ENCODE measurements at regions of chr1 and their contacts with region 1.

Region 1: GRCh38 chr1:13662493-13662892 is 37.5 kb upstream of the PRDM2 start:
- DNase-seq: peak; percentile 67
- H3K4me3 ChIP-seq: no peak overlapping the region
- H3K27ac ChIP-seq: peak overlapping the region in 3 of 4 donors; percentile 12 to 69 (median 34)
- H3K4me1 ChIP-seq: peaks cover 0 to 15% (median 4%) of the 10 kb centered on the region in 4 donors
- H3K27me3 ChIP-seq: no peaks in the 10 kb centered on the region
- CTCF ChIP-seq: no peak
- EP300 ChIP-seq: peak in 1 of 4 donors; percentile 32
- POLR2A ChIP-seq: no peak

Region 2: DNA sequence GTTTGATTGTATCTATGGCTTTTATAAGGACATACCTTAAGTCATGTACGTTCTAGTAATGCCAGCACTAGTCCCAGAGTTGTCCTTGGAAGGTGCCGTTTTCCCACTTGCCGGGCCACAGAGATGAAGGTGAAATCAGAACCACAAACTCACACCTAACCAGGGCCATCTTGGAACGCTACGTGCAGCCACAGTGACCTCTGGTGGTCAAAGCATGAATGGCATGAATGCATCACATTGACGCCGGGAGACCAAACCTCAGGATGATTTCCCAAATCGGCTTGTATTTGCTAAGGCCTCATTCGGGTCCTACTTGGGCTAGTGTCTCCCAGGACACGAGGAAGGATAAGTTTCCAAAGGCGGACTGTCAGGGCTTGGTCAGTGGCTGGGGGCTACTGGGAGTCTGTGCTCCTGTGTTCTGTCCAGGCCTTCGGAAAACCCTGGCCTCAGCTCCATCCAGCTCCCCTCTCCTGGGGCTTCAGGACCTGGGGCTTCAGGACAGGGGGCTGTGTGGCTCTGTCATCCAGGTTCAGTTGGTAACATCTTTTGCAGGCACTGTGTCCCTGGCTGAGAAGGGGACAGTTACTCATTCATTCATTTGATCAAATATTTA is 298.0 kb after region 1 on chr1:
- intact Hi-C with region 1: loop called (anchors 1 kb)
- DNase-seq: peak; percentile 81
- H3K4me3 ChIP-seq: no peak overlapping the region
- H3K27ac ChIP-seq: no peak overlapping the region
- H3K4me1 ChIP-seq: no peaks in the 10 kb centered on the region
- H3K27me3 ChIP-seq: no peaks in the 10 kb centered on the region
- CTCF ChIP-seq: peak; percentile 77 to 94 (median 92)
- EP300 ChIP-seq: no peak
- POLR2A ChIP-seq: no peak

Measured in sigmoid colon (tissue), 7 donors.